Activated CD8-positive, alpha-beta memory T cell treated with anti-CD3 and anti-CD28 coated beads, Interleukin-2, amount 10 ng/mL, durations not matched to agents 7 days and 5 days (primary cell): ENCODE measurements at regions of chr17 and their contacts with region 1.

Region 1: GRCh38 chr17:35612924-35613521 is 25.9 kb downstream of the AP2B1 start:
- DNase-seq: peak; percentile 56
- ATAC-seq: no peak
- H3K4me3 Mint-ChIP-seq: no peak overlapping the region
- H3K27ac Mint-ChIP-seq: no peak overlapping the region
- H3K4me1 Mint-ChIP-seq: no peaks in the 10 kb centered on the region
- H3K27me3 Mint-ChIP-seq: no peaks in the 10 kb centered on the region

Region 2: DNA sequence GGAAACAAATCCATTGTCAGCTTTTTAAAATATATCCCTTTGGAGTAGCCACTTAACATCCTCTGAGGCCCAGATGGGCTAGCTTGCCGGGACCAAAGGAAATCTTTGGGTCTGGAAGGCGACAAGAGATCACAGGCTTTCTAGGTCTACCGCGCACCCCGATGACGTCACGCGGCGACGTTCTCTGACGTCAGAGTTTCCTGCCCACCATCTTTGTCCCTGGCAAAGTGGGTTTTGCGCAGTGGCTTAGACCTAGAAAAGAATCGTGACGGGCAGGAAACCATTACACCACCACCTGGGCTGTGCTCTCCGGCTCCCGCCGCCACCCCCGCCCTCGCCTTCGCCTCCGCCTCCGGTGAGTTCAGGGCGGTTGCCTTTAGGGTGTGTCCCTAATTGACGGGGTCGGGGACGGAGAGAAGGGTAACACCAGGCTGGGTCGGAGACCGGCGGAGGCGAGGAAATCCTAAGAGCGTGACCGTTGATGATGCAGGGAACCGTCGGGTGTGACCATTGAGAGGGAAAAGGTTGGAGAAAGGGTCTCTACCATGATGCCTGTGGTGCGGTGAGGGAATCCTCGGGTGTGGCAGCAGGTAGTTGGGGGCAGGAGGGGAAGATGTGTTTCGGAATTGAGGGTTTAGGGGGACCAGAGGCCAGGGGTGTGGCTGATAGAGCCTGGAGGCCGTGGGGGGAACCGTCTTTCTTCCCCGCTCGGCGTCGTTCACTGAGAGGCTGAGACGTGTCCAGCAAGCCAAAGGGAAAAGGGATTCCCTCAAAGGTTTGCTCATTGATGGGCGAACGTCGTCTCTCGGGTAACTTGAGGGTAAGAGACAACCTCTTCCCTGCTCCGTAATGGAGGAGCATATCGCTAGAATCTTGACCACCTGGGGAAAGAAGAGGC is 25.7 kb before region 1 on chr17 and contains the start of gene AP2B1:
- CTCF ChIA-PET with region 1: interaction called, 12 read pairs
- DNase-seq: peak; percentile 98
- ATAC-seq: peak; percentile 97
- H3K4me3 Mint-ChIP-seq: peak within 1 kb of the TSS; percentile 96
- H3K27ac Mint-ChIP-seq: peak within 1 kb of the TSS; percentile 98
- H3K4me1 Mint-ChIP-seq: peaks cover 32% of the 10 kb centered on the region
- H3K27me3 Mint-ChIP-seq: no peaks in the 10 kb centered on the region
- total RNA-seq, gene AP2B1: 166 to 184 TPM